Right ventricle myocardium inferior (tissue), 1 donor: ENCODE measurements at regions of chr11 and their contacts with region 1.

Region 1: DNA sequence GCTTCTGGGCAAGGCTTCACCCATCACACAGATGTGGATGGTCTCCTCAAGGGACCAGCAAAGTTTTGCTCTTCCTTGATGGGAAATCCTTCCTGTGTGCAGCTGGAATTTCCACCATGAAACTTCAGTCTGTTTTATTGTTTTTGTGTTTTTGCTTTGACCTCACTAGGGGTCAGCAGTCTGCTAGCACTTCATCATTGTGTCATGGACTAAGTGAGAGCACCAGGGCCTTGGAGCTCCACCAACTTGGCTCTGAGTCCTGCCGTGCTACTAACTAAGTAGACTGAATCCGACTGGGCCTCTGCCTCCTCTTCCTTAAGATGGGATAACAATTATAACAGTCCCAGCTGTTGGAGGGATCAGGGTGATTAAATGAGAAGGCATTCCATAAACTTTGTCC is 305.8 kb upstream of the NCAM1 start:
- DNase-seq: peak; percentile 91
- ATAC-seq: peak; percentile 78

Region 2: DNA sequence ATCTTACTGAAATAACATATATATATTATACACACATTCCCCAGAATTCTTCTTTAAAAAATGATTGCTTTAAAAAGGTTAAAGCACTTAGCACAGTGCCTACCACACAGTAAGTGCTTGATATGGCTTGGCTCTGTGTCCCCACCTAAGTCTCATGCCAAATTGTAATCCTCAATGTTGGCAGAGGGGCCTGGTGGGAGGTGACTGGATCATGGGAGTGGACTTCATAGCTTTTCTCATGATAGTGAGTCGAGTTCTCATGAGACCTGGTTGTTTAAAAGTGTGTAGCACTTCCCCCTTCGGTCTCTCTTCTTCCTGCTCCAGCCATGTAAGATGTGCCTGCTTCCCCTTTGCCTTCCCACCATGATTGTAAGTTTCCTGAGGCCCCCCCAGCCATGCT is 750.0 kb before region 1 on chr11:
- intact Hi-C with region 1: no loop called
- DNase-seq: peak; percentile 47
- ATAC-seq: peak; percentile 58

Region 3: DNA sequence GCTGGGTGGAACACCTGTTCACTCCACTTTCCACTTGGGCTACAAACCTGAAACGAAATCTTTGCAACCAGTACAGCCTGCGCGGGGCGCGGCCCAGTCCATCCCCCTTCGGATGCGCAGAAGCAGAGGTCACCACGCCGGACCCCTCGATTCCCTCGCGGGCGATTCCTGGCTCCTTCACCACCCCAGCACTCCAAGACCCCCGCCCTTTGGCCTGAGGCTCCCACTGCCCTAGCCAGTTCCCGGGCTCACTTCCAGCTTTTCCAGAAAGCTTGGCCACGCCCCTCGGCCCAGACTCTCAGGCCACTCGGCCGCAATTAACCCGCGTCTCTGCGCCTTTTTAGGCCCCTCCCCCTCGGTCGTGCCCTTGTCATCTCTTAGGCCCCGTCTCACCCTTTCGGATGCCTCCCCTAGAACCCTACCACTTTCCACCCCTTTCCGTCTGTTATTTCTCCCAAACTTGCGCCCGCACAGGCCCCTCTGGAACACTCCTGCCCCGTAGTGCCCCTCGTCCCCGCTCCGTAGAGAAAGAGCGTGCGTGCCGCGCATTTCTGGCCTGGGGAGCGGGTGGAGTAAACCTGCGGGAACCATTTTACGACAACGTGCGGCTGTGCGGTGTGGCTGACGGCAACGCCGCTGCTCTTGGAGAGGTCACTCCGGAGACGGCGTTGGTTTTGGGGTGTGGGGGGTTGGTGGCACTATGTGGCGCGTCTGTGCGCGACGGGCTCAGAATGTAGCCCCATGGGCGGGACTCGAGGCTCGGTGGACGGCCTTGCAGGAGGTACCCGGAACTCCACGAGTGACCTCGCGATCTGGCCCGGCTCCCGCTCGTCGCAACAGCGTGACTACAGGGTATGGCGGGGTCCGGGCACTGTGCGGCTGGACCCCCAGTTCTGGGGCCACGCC is 630.3 kb before region 1 on chr11 and contains the start of gene DLAT:
- intact Hi-C with region 1: no loop called
- DNase-seq: peak; percentile 92
- ATAC-seq: peak; percentile 93
- total RNA-seq, gene DLAT: 157 TPM

Region 4: GRCh38 chr11:112588252-112588694 is 67.1 kb before region 1 on chr11:
- intact Hi-C with region 1: loop called (anchors 5 kb)
- DNase-seq: peak; percentile 84
- ATAC-seq: peak; percentile 82

Region 5: GRCh38 chr11:112724496-112724790 is 69.1 kb after region 1 on chr11:
- intact Hi-C with region 1: no loop called
- DNase-seq: no peak
- ATAC-seq: no peak

Region 6: GRCh38 chr11:112759418-112759817 is 104.0 kb after region 1 on chr11:
- intact Hi-C with region 1: loop called (anchors 5 kb)
- DNase-seq: no peak
- ATAC-seq: peak; percentile 81

Region 7: GRCh38 chr11:112777283-112777751 is 121.9 kb after region 1 on chr11:
- intact Hi-C with region 1: loop called (anchors 5 kb)
- DNase-seq: no peak
- ATAC-seq: no peak

Region 8: DNA sequence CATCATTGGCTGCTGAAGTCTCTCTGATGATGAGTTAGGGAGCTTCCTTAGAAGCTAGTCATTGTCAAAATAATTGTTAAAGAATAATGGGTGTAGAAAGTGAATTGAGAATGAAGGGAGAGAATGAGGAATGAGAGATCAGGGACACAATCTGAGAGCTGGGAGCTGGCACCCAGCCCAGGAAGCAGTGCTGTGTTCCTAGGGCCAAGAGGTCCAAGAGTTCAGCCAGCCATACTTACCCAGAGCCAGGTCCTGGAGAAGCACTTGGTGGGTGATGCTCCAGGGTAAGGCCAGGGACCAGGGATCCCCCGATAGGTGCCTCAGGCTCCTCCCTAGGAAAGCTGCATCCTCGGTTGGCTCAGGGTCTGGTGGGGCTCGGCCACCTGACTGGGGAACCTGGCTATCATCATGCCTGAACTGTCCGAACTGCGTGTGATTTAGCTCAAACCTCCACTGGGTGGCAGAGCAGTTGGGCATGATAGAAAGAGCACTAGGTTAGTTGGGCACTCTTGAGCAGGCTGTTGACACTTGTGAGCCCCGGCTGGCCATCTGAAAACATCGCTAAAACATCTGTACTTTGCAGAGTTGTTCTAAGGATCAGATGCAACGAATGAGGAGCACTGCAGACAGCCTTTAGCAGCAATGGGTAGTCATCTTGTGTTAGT is 181.9 kb after region 1 on chr11:
- intact Hi-C with region 1: loop called (anchors 10 kb)
- DNase-seq: no peak
- ATAC-seq: peak; percentile 56

Region 9: DNA sequence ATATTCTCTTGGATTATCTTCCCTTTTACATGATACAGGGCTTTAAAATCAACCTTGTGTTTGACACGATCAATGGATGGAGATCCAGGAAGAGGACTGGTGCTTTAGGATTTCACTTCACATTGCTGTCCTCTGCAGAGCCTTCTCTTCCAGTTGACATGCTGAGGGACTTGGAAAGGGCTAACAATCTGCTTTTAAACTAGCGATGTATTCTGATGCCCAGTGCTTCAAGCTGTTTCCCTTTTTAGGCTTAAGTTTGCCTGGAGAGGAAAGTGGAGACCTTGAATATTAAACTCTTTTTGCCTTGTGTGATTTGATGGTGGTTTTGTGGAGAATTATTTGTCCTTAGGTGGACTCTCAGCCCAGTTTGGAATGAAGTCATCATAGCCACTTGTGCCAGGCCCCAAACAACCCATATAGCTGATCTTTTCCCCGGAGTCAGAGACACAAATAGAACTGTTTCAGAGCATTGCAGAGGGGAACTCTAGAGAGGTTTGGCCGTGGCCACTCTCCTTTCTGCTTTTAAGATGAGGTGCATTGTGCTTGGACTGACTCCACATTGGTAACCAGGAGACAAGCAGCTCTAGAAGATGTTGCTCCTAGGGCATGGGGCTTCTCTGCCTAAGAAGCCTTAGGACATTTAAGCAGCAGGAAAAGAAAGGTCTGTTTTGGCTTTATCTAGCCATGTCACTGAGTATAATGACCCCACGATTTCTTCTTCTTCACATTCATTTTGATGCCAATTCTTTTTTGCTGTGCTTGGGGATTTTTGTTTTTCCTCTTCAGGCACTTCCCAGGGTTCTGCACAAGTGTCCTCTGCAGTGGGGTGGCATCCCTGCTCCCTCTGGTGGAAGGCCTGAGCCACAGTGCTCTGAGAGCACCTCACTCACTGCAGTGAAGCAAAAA is 458.7 kb after region 1 on chr11:
- intact Hi-C with region 1: loop called (anchors 10 kb)
- DNase-seq: no peak
- ATAC-seq: peak; percentile 85

Region 10: GRCh38 chr11:113289431-113290187 is 634.2 kb after region 1 on chr11:
- intact Hi-C with region 1: loop called (anchors 5 kb)
- DNase-seq: no peak
- ATAC-seq: peak; percentile 77